ENCODE measurements at regions of chr13 and their contacts with region 1.

Region 1: GRCh38 chr13:108155185-108156106 is 59.9 kb downstream of the LIG4 start:
- DNase-seq: peak; percentile 74
- ATAC-seq: peak; percentile 45
- H3K4me3 Mint-ChIP-seq: no peak overlapping the region
- H3K27ac Mint-ChIP-seq: no peak overlapping the region
- H3K4me1 Mint-ChIP-seq: no peaks in the 10 kb centered on the region
- H3K27me3 Mint-ChIP-seq: peaks cover 8% of the 10 kb centered on the region
- CTCF ChIP-seq: peak; percentile 95

Region 2: GRCh38 chr13:107069108-107069786 is 1086.2 kb before region 1 on chr13:
- CTCF ChIA-PET with region 1: no interaction called
- POLR2A ChIA-PET with region 1: no interaction called
- intact Hi-C with region 1: no loop called
- DNase-seq: no peak
- ATAC-seq: no peak
- H3K4me3 Mint-ChIP-seq: no peak overlapping the region
- H3K27ac Mint-ChIP-seq: no peak overlapping the region
- H3K4me1 Mint-ChIP-seq: no peaks in the 10 kb centered on the region
- H3K27me3 Mint-ChIP-seq: no peaks in the 10 kb centered on the region
- CTCF ChIP-seq: no peak

Region 3: DNA sequence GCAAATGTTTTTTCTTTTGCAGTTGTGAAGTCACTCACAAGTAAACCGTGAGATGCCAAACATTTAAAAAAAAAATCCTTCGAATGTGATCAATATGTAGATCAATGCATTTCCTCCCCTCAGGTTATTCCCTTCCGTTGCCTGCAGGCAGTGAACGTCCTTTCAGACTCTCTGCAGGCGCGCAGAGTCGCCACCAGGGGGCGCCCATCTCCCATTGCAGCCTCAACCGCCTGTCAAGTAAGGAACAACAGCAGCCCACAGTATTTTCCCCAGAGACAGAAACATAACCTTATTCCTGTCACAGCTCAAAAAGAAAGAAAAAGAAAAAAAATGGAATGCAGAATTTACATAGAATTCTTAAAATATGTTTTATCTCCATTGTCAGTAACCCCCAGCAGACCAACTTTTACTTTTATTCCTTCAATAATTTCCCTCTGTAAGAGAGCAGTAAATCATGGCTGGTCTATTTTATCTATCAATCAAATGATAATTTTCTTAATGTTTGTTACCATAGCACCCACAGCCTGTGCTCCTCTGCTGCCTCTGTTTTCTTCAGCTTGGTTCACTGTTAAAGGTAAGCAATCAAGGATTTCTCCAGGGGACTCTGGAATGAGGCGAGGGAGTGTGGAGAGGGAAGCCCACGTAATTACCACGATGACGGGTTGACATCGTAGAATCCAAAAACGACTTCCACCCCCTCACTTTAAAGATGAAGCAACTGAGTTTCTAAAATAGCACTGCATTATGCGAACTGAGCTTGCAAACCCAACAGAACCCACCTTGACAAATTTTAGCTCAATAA is 949.9 kb before region 1 on chr13:
- CTCF ChIA-PET with region 1: interaction called, 7 read pairs
- POLR2A ChIA-PET with region 1: no interaction called
- intact Hi-C with region 1: loop called (anchors 2 kb)
- DNase-seq: peak; percentile 65
- ATAC-seq: peak; percentile 76
- H3K4me3 Mint-ChIP-seq: no peak overlapping the region
- H3K27ac Mint-ChIP-seq: no peak overlapping the region
- H3K4me1 Mint-ChIP-seq: no peaks in the 10 kb centered on the region
- H3K27me3 Mint-ChIP-seq: peaks cover 2% of the 10 kb centered on the region
- CTCF ChIP-seq: peak; percentile 98

Region 4: GRCh38 chr13:108166078-108166477 is 10.6 kb after region 1 on chr13:
- CTCF ChIA-PET with region 1: interaction called, 32 read pairs
- POLR2A ChIA-PET with region 1: no interaction called
- intact Hi-C with region 1: no loop called
- DNase-seq: no peak
- ATAC-seq: no peak
- H3K4me3 Mint-ChIP-seq: no peak overlapping the region
- H3K27ac Mint-ChIP-seq: no peak overlapping the region
- H3K4me1 Mint-ChIP-seq: no peaks in the 10 kb centered on the region
- H3K27me3 Mint-ChIP-seq: peaks cover 6% of the 10 kb centered on the region
- CTCF ChIP-seq: no peak